Right ventricle myocardium inferior (tissue), 1 donor: ENCODE measurements at regions of chr12 and their contacts with region 1.

Region 1: GRCh38 chr12:19643635-19644034 is 204.3 kb downstream of the AEBP2 start:
- DNase-seq: no peak
- ATAC-seq: no peak

Region 2: DNA sequence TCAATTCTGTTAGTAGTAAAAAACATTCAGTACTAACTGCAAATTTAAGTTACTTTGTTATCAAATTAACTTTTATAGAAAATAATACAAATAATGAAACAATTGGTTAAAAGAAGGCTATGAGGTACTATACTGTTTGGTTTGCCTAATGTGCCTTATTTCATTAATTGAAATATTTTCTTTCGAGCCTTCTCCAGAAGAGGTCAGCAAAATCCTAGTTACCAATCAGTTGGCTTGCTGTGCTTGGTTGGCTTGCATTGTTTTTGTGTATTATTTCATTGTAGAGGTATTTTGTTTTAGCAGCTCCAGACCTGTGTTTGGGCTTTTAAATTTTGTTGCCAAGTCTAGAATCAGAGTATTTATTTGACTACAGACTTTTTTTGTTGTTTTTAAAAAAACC is 135.8 kb before region 1 on chr12:
- intact Hi-C with region 1: loop called (anchors 5 kb)
- DNase-seq: no peak
- ATAC-seq: no peak